BJ (cell line): ENCODE measurements at regions of chr19 and their contacts with region 1.

Region 1: GRCh38 chr19:6767357-6768235 is at the start of gene SH2D3A:
- DNase-seq: no peak
- H3K4me3 ChIP-seq: no peak within 1 kb of the TSS
- H3K27me3 ChIP-seq: peaks cover 6% of the 10 kb centered on the region
- CTCF ChIP-seq: no peak
- polyA plus RNA-seq, gene SH2D3A: 0.07 TPM in 1 of 2 replicates, not detected in the other

Region 2: DNA sequence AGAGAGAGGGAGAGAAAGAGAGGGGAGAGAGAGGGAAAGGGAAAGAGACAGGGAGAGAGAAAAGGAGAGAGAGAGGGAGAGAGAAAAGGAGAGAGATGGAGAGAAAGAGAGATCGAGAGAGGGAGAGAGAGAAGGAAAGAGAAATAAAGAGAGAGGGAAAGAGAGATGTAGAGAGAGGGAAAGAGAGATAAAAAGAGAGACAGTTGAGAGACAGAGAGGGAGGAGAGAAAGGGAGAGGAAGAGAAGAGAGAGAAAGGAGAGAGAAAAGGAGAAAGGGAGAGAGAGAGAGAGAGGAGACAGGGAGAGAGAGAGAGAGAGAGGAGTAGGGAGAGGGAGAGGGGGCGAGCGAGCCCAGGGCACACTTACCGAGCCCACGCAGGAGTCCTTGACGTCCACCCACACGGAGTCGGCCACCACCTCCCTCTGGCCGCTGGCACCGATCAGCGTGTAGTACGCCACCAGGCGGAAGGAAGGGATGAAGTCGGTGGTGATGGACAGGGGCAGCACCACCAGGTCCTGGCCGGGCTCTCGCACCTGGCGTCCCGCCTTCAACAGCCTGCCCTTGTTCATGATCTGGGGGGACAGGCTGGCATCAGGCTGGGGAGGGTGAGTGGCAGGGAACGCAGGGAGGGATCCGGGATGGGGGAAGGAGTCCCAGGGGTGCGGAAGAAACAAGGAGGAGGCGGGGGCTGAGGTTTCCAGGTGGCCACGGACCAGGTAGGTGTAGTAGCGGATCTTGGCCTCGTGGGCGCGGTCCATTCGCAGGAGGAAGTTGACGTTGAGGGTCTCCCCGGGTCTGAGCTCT is 57.1 kb before region 1 on chr19:
- CTCF ChIA-PET with region 1: no interaction called
- POLR2A ChIA-PET with region 1: no interaction called
- DNase-seq: no peak
- H3K4me3 ChIP-seq: no peak overlapping the region
- H3K27me3 ChIP-seq: peaks cover 2% of the 10 kb centered on the region; the same call in 1 of the 2 replicates
- CTCF ChIP-seq: no peak

Region 3: GRCh38 chr19:6737284-6738046 is 30.1 kb before region 1 on chr19 and contains the start of gene GPR108:
- CTCF ChIA-PET with region 1: interaction called, 10 read pairs
- POLR2A ChIA-PET with region 1: no interaction called
- DNase-seq: peak; percentile 100
- H3K4me3 ChIP-seq: peak within 1 kb of the TSS; percentile 84
- H3K27me3 ChIP-seq: no peaks in the 10 kb centered on the region
- CTCF ChIP-seq: no peak
- polyA plus RNA-seq, gene GPR108: 56.1 and 71.4 TPM in 2 replicates